ENCODE measurements at regions of chr5 and their contacts with region 1.

Region 1: DNA sequence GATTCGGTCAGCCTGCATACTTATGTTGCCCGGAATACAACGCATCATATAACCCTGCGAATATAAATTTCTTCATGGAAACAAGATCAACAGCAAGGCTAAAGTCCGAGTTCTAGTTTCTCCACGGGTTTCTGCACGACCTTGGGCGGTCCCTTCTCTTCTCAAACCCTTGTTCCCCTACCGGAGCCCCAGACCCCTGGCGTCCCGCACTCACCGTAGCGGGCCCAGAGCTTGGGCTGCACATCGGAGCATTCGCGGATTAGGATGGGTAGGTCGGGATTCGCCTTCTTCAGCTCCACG is 438 bp downstream of the NDUFA2 start:
- DNase-seq: peak in 1 of 2 experiments; percentile 28
- H3K4me3 ChIP-seq: peak overlapping the region; percentile 73
- H3K4me3 Mint-ChIP-seq: peak overlapping the region; percentile 96
- H3K27ac Mint-ChIP-seq: peak overlapping the region; percentile 96
- H3K4me1 ChIP-seq: no peaks in the 10 kb centered on the region
- H3K4me1 Mint-ChIP-seq: peaks cover 6% of the 10 kb centered on the region
- H3K27me3 ChIP-seq: no peaks in the 10 kb centered on the region
- H3K27me3 Mint-ChIP-seq: no peaks in the 10 kb centered on the region
- CTCF ChIP-seq: no peak

Region 2: DNA sequence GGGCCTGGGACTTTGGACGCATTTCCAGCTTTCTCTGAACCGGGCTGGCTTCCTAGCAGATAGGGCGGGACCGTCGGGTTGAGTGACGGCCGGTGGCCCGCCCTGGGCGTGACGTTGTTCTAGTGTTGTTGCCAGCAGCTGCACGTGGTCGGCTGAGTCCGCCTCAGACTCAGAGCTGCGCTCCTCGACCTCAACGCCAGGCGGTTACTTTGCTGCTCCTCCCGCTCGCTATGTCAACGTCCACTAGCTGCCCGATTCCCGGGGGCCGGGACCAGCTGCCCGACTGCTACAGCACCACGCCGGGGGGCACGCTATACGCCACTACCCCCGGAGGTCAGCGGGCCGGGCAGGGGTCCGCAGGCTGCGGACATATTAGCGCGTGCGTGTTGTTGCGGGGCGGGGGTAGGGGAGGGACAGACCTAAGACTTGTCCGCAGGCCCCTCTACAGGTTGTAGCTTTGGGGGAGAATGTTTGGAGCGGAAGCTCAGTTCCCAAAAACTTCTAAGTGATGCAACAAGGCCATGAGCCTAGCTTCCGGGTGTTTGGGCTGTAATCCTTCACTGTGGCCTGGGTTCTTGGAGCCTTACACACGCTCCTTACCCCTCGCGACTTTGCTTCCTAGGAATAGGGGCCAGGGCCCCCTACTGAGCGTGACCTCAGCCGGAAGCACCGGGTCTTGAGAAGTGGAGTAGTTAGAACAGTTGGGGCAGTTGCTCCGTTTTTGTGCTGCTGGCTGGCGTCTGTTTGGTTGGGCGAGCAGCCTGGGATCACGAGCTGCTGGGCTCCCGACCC is 99.3 kb before region 1 on chr5 and contains the start of gene EIF4EBP3:
- CTCF ChIA-PET with region 1: interaction called, 9 read pairs
- POLR2A ChIA-PET with region 1: interaction called, 30 read pairs
- intact Hi-C with region 1: no loop called
- DNase-seq: peak; percentile 97
- H3K4me3 ChIP-seq: peak within 1 kb of the TSS; percentile 38
- H3K4me3 Mint-ChIP-seq: peak within 1 kb of the TSS; percentile 69
- H3K27ac Mint-ChIP-seq: peak within 1 kb of the TSS; percentile 88
- H3K4me1 ChIP-seq: peaks cover 13% of the 10 kb centered on the region
- H3K4me1 Mint-ChIP-seq: peaks cover 19% of the 10 kb centered on the region
- H3K27me3 ChIP-seq: no peaks in the 10 kb centered on the region
- H3K27me3 Mint-ChIP-seq: no peaks in the 10 kb centered on the region
- CTCF ChIP-seq: peak; percentile 37 to 48
- total RNA-seq, gene EIF4EBP3: 7.6 and 8.0 TPM in 2 replicates

Region 3: DNA sequence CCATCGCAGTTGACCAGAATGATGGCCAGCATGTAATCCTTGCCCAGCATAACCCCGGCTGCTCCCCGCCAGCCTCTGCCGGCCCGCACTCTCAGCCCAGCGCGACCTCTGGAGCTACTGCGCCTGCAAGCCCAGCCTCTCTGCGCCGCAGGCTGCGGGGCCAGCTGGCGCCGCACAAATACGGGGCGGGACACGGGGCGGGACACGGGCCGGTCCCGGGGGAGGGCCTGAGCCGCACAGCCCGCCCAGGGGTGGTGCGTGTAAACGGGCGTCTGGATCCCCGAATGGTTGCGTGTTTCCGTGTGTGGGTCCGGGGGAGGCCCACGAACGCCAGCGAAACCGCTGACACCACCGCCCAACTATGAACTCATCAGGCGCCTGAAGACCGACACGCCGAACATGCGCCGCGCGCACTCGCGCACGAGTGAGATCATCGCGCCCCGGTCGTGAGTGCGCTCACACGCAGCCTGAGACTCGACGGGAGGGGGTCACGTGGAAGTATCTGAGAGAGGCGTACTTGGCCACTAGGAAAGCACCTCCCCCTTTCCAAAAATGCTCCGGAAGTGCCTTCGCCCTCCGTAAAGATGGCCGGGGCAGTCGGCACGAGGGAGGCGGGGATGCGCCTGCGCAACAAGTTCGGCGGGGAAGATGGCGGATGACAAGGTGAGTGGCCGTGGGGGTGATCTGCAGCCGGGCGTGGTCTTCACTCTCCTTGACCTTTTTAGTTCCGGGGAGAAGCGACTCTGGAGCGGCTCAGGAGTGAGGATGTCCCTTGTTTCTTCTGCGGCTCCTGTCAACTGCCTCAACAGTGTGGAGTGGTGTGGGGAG is 82.6 kb before region 1 on chr5 and contains the starts of genes APBB3 and SLC35A4:
- CTCF ChIA-PET with region 1: no interaction called
- POLR2A ChIA-PET with region 1: interaction called, 5 read pairs
- intact Hi-C with region 1: loop called (anchors 1 kb)
- DNase-seq: peak; percentile 96 to 98
- H3K4me3 ChIP-seq: peak within 1 kb of the TSS; percentile 68
- H3K4me3 Mint-ChIP-seq: peak within 1 kb of the TSS; percentile 84
- H3K27ac Mint-ChIP-seq: peak within 1 kb of the TSS; percentile 93
- H3K4me1 ChIP-seq: peaks cover 7% of the 10 kb centered on the region; the same call in 1 of the 2 replicates
- H3K4me1 Mint-ChIP-seq: peaks cover 6% of the 10 kb centered on the region
- H3K27me3 ChIP-seq: no peaks in the 10 kb centered on the region
- H3K27me3 Mint-ChIP-seq: no peaks in the 10 kb centered on the region
- CTCF ChIP-seq: no peak
- total RNA-seq, gene APBB3: 23.4 and 25.1 TPM in 2 replicates
- total RNA-seq, gene SLC35A4: 79.5 and 91.3 TPM in 2 replicates

Region 4: DNA sequence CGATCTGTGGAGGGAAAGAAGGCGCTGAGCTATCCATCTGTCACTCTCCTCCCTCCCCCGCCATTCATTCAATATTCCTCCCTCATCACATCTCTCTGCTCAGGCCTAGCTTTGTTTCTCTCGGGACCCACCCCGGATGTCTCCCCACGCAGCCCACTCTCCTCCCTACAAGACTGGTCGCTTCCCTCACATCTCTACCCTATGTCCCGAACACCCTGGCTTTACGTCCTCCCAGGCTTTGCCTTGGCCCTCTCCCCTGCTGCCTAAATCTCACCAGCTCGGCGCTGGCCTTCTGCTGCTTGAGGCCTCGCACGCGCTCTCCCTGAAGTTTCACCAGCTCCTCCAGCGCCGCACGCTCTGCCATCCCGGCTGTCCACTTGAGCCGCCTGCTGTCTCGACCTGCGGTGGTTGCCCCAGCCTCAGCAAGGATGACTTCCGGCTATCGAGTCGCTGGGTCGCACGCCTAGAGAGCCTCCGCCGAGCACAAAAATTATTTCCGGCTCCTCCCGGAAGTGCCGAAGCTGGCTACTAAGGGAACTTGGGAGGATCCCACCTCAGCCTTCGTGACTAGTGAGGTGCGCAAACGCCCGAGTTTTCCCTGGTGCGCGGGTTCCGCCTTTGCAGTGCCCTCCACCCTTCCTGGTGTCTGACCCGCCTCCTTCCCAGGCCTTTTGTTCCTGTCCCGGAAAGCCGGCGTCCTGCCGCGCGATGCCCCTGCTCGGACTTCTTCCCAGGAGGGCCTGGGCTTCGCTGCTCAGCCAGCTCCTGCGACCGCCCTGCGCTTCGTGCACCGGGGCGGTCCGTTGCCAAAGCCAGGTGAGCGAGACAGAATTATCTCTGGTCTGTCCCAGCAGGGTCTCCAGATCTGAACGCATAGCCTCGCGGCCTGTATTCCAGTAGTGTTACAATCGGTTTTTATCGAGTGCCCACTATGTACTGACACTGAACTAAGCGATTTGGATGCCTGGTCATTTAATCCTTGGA is 44.2 kb after region 1 on chr5 and contains the starts of genes HARS1 and HARS2:
- CTCF ChIA-PET with region 1: no interaction called
- POLR2A ChIA-PET with region 1: interaction called, 8 read pairs
- intact Hi-C with region 1: loop called (anchors 2 kb)
- DNase-seq: peak; percentile 94 to 96
- H3K4me3 ChIP-seq: peak within 1 kb of the TSS; percentile 96
- H3K4me3 Mint-ChIP-seq: peak within 1 kb of the TSS; percentile 94
- H3K27ac Mint-ChIP-seq: peak within 1 kb of the TSS; percentile 89
- H3K4me1 ChIP-seq: peaks cover 16% of the 10 kb centered on the region; the same call in 1 of the 2 replicates
- H3K4me1 Mint-ChIP-seq: no peaks in the 10 kb centered on the region
- H3K27me3 ChIP-seq: no peaks in the 10 kb centered on the region
- H3K27me3 Mint-ChIP-seq: no peaks in the 10 kb centered on the region
- CTCF ChIP-seq: no peak
- total RNA-seq, gene HARS1: 82.4 and 83.5 TPM in 2 replicates
- total RNA-seq, gene HARS2: 36.5 and 38.6 TPM in 2 replicates

Region 5: GRCh38 chr5:140710899-140711552 is 64.0 kb after region 1 on chr5:
- CTCF ChIA-PET with region 1: interaction called, 4 read pairs
- POLR2A ChIA-PET with region 1: interaction called, 16 read pairs
- intact Hi-C with region 1: no loop called
- DNase-seq: peak; percentile 96 to 97
- H3K4me3 ChIP-seq: peak overlapping the region; percentile 46
- H3K4me3 Mint-ChIP-seq: peak overlapping the region; percentile 93
- H3K27ac Mint-ChIP-seq: peak overlapping the region; percentile 98
- H3K4me1 ChIP-seq: no peaks in the 10 kb centered on the region
- H3K4me1 Mint-ChIP-seq: peaks cover 7% of the 10 kb centered on the region
- H3K27me3 ChIP-seq: no peaks in the 10 kb centered on the region
- H3K27me3 Mint-ChIP-seq: peaks cover 4% of the 10 kb centered on the region
- CTCF ChIP-seq: no peak

Region 6: GRCh38 chr5:140840978-140841959 is 194.3 kb after region 1 on chr5 and contains the start of gene PCDHA8:
- CTCF ChIA-PET with region 1: no interaction called
- POLR2A ChIA-PET with region 1: no interaction called
- intact Hi-C with region 1: no loop called
- DNase-seq: no peak
- H3K4me3 ChIP-seq: no peak within 1 kb of the TSS
- H3K4me3 Mint-ChIP-seq: no peak within 1 kb of the TSS
- H3K27ac Mint-ChIP-seq: no peak within 1 kb of the TSS
- H3K4me1 ChIP-seq: no peaks in the 10 kb centered on the region
- H3K4me1 Mint-ChIP-seq: no peaks in the 10 kb centered on the region
- H3K27me3 ChIP-seq: no peaks in the 10 kb centered on the region
- H3K27me3 Mint-ChIP-seq: no peaks in the 10 kb centered on the region
- CTCF ChIP-seq: no peak
- total RNA-seq, gene PCDHA8: not detected in 2 replicates